Activated naive CD4-positive, alpha-beta T cell treated with anti-CD3 and anti-CD28 coated beads for 36 hours (primary cell): ENCODE measurements at regions of chr10 and their contacts with region 1.

Region 1: GRCh38 chr10:118002581-118002980 is 44.2 kb downstream of the RAB11FIP2 start:
- DNase-seq: peak; percentile 42
- H3K4me3 Mint-ChIP-seq: no peak overlapping the region
- H3K27ac Mint-ChIP-seq: peak overlapping the region; percentile 67
- H3K4me1 Mint-ChIP-seq: peaks cover 6% of the 10 kb centered on the region
- H3K27me3 Mint-ChIP-seq: no peaks in the 10 kb centered on the region

Region 2: GRCh38 chr10:118035354-118036005 is 32.9 kb after region 1 on chr10:
- CTCF ChIA-PET with region 1: no interaction called
- intact Hi-C with region 1: loop called (anchors 5 kb)
- DNase-seq: no peak
- H3K4me3 Mint-ChIP-seq: no peak overlapping the region
- H3K27ac Mint-ChIP-seq: no peak overlapping the region
- H3K4me1 Mint-ChIP-seq: peaks cover 30% of the 10 kb centered on the region
- H3K27me3 Mint-ChIP-seq: no peaks in the 10 kb centered on the region

Region 3: DNA sequence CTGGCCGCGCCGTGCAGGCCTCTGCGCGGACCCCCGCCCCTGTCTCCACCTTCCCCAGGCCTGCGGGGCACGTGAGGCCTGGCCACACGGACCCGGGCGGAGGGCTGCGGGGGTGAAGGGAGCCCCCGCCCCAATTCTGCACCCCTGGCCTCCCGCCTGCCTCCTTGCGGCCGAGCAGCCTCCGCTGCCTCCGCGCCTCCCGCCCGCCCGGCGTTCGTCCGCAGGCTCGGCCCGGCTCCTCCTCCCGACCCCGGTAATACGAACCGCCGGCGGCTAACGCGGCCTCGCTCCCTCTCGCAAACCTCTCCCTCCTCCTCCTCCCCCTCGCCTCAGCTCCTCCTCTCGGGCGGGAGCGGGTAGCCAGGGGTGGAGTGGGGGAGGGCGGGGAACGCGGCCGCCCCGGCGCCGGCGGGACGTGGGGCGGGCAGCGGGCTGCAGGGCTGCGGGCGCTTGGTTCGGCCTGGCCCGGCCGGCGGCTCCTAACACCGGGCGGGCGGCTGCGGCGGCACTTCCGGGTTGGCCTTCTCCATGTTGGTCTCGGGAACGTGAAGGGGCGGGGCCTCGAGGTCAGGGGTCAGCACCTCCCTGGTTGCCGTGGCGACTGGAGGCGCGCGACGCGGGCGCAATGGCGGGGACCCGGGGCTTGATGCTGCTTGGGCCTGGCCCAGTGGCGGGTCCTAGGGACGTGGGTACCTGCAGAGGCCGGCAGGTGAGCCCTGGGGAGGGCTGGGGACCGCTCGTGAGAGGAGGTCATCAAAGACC is 44.0 kb after region 1 on chr10 and contains the start of gene RAB11FIP2:
- CTCF ChIA-PET with region 1: no interaction called
- intact Hi-C with region 1: no loop called
- DNase-seq: peak; percentile 97
- H3K4me3 Mint-ChIP-seq: peak within 1 kb of the TSS; percentile 86
- H3K27ac Mint-ChIP-seq: peak within 1 kb of the TSS; percentile 72
- H3K4me1 Mint-ChIP-seq: peaks cover 37% of the 10 kb centered on the region
- H3K27me3 Mint-ChIP-seq: no peaks in the 10 kb centered on the region
- total RNA-seq, gene RAB11FIP2: 9.9 to 11.6 TPM